ENCODE measurements at regions of chr17 and their contacts with region 1.

Region 1: GRCh38 chr17:55641676-55642081 is 81.0 kb downstream of the TMEM100 start:
- DNase-seq: peak; percentile 77
- H3K4me3 ChIP-seq: no peak overlapping the region
- H3K27ac ChIP-seq: no peak overlapping the region
- H3K4me1 ChIP-seq: no peaks in the 10 kb centered on the region
- H3K27me3 ChIP-seq: peaks cover 0 to 3% of the 10 kb centered on the region in 2 experiments
- CTCF ChIP-seq: peak; percentile 56 to 80
- POLR2A ChIP-seq: no peak

Region 2: GRCh38 chr17:55466671-55467070 is 175.0 kb before region 1 on chr17:
- CTCF ChIA-PET with region 1: no interaction called
- POLR2A ChIA-PET with region 1: no interaction called
- dilution Hi-C with region 1: no loop called
- intact Hi-C with region 1: no loop called
- DNase-seq: no peak
- H3K4me3 ChIP-seq: no peak overlapping the region
- H3K27ac ChIP-seq: no peak overlapping the region
- H3K4me1 ChIP-seq: no peaks in the 10 kb centered on the region
- H3K27me3 ChIP-seq: no peaks in the 10 kb centered on the region
- CTCF ChIP-seq: no peak
- POLR2A ChIP-seq: no peak

Region 3: DNA sequence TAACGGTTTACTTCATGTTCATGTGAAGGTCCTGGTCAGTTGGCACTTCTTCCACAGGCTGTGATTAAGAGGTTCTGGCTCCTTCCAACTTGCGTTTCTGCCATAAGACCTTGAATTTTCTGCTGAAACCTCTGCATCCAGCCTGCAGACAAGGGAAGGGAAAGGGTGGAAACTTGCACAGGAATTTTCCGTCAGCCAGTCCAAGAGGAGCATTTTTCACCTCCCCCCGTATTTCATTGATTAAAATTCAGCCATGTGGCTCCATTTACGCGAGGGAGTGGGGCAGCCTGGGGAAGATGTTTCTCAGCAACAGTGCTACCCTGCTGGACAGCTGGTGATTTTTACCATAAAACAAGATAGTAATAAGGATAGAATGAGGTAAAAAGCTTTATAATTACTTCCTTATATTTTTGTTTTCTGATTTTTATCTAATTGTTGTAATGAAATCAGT is 29.0 kb before region 1 on chr17:
- CTCF ChIA-PET with region 1: interaction called, 12 read pairs
- POLR2A ChIA-PET with region 1: no interaction called
- dilution Hi-C with region 1: no loop called
- intact Hi-C with region 1: no loop called
- DNase-seq: no peak
- H3K4me3 ChIP-seq: no peak overlapping the region
- H3K27ac ChIP-seq: no peak overlapping the region
- H3K4me1 ChIP-seq: no peaks in the 10 kb centered on the region
- H3K27me3 ChIP-seq: no peaks in the 10 kb centered on the region
- CTCF ChIP-seq: no peak
- POLR2A ChIP-seq: no peak

Region 4: GRCh38 chr17:55652114-55652823 is 10.6 kb after region 1 on chr17:
- CTCF ChIA-PET with region 1: interaction called, 11 read pairs
- POLR2A ChIA-PET with region 1: no interaction called
- dilution Hi-C with region 1: no loop called
- intact Hi-C with region 1: no loop called
- DNase-seq: no peak
- H3K4me3 ChIP-seq: no peak overlapping the region
- H3K27ac ChIP-seq: no peak overlapping the region
- H3K4me1 ChIP-seq: no peaks in the 10 kb centered on the region
- H3K27me3 ChIP-seq: no peaks in the 10 kb centered on the region
- CTCF ChIP-seq: no peak
- POLR2A ChIP-seq: no peak

Region 5: GRCh38 chr17:55717898-55718735 is 76.4 kb after region 1 on chr17:
- CTCF ChIA-PET with region 1: interaction called, 13 read pairs
- POLR2A ChIA-PET with region 1: no interaction called
- dilution Hi-C with region 1: no loop called
- intact Hi-C with region 1: no loop called
- DNase-seq: peak; percentile 72
- H3K4me3 ChIP-seq: no peak overlapping the region
- H3K27ac ChIP-seq: no peak overlapping the region
- H3K4me1 ChIP-seq: peaks cover 2% of the 10 kb centered on the region
- H3K27me3 ChIP-seq: peaks cover 0 to 4% of the 10 kb centered on the region in 2 experiments
- CTCF ChIP-seq: peak; percentile 60 to 66
- POLR2A ChIP-seq: no peak

Region 6: DNA sequence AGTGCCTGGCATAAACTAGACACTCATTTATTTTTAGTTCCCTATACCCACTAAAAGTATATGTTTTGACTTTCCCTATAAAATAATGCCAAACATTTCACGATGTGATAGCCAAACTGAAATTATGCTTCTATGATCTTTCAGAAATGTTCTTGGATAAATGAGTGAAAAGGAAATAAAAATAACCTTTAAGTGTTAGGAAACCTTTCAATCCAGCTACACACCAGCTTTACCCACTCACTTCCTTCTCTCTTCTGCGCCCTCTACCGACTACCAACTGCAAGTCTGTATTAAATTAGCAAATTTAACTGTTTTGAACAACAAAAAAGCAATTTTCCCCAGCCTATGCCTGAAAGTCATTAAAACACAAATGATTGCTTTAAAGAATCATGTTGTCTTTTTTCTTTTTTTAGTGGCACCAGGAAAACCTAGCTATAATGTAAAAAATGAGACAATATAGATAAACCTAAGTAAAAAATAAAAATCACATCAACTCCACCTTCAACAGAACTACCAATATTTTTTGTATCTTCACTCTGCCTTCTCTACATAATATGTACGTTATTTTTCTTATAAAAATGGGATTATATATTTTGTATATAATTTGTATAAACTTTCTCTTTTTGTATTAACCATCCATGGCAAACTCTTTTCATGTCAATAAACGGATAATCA is 94.2 kb after region 1 on chr17:
- CTCF ChIA-PET with region 1: interaction called, 10 read pairs
- POLR2A ChIA-PET with region 1: no interaction called
- dilution Hi-C with region 1: no loop called
- intact Hi-C with region 1: no loop called
- DNase-seq: peak; percentile 32
- H3K4me3 ChIP-seq: no peak overlapping the region
- H3K27ac ChIP-seq: no peak overlapping the region
- H3K4me1 ChIP-seq: no peaks in the 10 kb centered on the region
- H3K27me3 ChIP-seq: no peaks in the 10 kb centered on the region
- CTCF ChIP-seq: peak; percentile 44 to 54
- POLR2A ChIP-seq: no peak

Measured in endothelial cell of umbilical vein (primary cell).